PC-3 (cell line): ENCODE measurements at regions of chr12 and their contacts with region 1.

Region 1: GRCh38 chr12:85559536-85559935 is 276.7 kb downstream of the RASSF9 start:
- DNase-seq: peak; percentile 20
- ATAC-seq: 0 out of 2 replicates have a peak, but pooled peaks have one; percentile 16
- H3K4me3 ChIP-seq: no peak overlapping the region
- H3K27ac ChIP-seq: no peak overlapping the region
- H3K4me1 ChIP-seq: peaks cover 8% of the 10 kb centered on the region; the same call in 1 of the 2 replicates
- H3K27me3 ChIP-seq: no peaks in the 10 kb centered on the region
- CTCF ChIP-seq: no peak

Region 2: DNA sequence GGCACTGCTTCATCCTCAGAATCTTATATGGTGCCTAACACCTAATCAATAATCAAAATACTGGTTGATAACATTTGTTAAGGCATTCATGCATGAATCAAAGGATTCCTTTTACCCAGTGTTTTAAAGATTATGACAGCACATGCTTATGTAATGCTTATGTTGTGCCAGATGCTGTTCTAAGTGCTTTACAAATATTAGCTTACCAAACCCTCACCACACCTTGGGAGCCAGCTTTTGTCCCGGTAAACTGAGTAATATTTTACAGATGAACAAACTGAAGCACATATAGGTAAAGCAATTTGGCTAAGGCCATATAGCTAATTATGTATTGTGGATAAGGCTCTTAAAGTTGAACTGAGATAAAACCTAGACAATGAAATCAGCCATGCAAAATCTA is 70.3 kb before region 1 on chr12:
- CTCF ChIA-PET with region 1: no interaction called
- POLR2A ChIA-PET with region 1: no interaction called
- intact Hi-C with region 1: loop called (anchors 5 kb)
- DNase-seq: peak; percentile 46
- ATAC-seq: peak; percentile 84
- H3K4me3 ChIP-seq: no peak overlapping the region
- H3K27ac ChIP-seq: no peak overlapping the region
- H3K4me1 ChIP-seq: peaks cover 12% of the 10 kb centered on the region
- H3K27me3 ChIP-seq: no peaks in the 10 kb centered on the region
- CTCF ChIP-seq: no peak